ENCODE measurements at regions of chr2 and their contacts with region 1.

Region 1: DNA sequence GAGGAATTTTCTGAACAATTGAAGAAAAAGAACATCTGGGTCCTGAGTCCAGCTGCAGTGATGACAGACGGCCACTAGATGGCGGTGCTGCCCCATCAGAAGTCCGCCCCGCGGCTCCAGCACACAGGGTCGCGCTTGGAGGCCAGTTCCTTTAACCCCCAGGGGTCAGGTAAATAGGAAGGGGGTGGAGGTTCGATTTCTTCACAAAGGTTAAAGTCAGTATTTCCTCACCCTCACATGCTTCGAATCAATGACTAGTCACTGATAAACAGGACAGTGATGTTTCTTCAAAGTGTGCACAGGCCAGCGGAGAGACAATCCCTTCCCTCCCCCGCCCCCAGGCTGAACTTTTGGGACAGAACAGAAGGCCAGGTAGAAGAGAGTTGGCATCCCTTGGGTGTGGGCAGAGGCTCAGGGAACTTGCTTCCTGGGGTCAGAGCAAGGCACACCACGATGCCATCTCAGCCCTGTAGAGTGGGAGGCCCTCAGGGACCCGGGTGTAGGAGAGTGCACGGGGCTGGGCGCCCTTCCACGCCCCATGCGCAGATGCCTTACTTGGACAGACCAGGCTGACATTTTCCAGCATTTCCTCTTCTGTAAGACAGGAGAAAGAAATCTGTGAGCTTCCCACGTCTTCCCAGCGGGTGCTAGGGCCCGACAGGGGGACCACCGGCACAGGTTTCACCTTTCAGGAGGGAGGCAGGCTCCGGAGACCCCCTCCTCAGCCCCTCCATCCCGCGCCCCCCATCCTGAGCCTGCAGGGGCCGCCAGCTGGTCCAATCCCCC is 722 bp downstream of the APOB start:
- DNase-seq: peak; percentile 74 to 87
- H3K4me3 ChIP-seq: peak overlapping the region; percentile 5 to 34 (median 16)
- H3K27ac ChIP-seq: no peak overlapping the region
- H3K4me1 ChIP-seq: peaks cover 12 to 38% (median 24%) of the 10 kb centered on the region in 4 donors
- H3K27me3 ChIP-seq: peaks cover 0 to 36% (median 18%) of the 10 kb centered on the region in 3 donors
- CTCF ChIP-seq: peak in 5 of 7 experiments; percentile 84 to 97 (median 96)
- EP300 ChIP-seq: no peak
- POLR2A ChIP-seq: no peak

Region 2: GRCh38 chr2:21118302-21118920 is 75.3 kb after region 1 on chr2:
- intact Hi-C with region 1: loop called (anchors 10 kb)
- DNase-seq: peak in 1 of 2 donors; percentile 44
- H3K4me3 ChIP-seq: no peak overlapping the region
- H3K27ac ChIP-seq: no peak overlapping the region
- H3K4me1 ChIP-seq: no peaks in the 10 kb centered on the region
- H3K27me3 ChIP-seq: peaks cover 0 to 6% (median 0%) of the 10 kb centered on the region in 3 donors
- CTCF ChIP-seq: peak in 3 of 7 experiments; percentile 22 to 36 (median 27)
- EP300 ChIP-seq: no peak
- POLR2A ChIP-seq: no peak

Region 3: GRCh38 chr2:21270708-21271122 is 227.6 kb after region 1 on chr2:
- intact Hi-C with region 1: no loop called
- DNase-seq: peak in 1 of 2 donors; percentile 69
- H3K4me3 ChIP-seq: no peak overlapping the region
- H3K27ac ChIP-seq: peak overlapping the region in 1 of 5 donors; percentile 39
- H3K4me1 ChIP-seq: peaks cover 0 to 22% (median 2%) of the 10 kb centered on the region in 4 donors
- H3K27me3 ChIP-seq: no peaks in the 10 kb centered on the region
- CTCF ChIP-seq: no peak
- EP300 ChIP-seq: peak; percentile 62
- POLR2A ChIP-seq: no peak

Region 4: GRCh38 chr2:21317131-21317530 is 274.0 kb after region 1 on chr2:
- intact Hi-C with region 1: loop called (anchors 5 kb)
- DNase-seq: peak; percentile 50 to 67
- H3K4me3 ChIP-seq: no peak overlapping the region
- H3K27ac ChIP-seq: no peak overlapping the region
- H3K4me1 ChIP-seq: no peaks in the 10 kb centered on the region
- H3K27me3 ChIP-seq: no peaks in the 10 kb centered on the region
- CTCF ChIP-seq: peak in 5 of 7 experiments; percentile 38 to 85 (median 57)
- EP300 ChIP-seq: no peak
- POLR2A ChIP-seq: no peak

Region 5: DNA sequence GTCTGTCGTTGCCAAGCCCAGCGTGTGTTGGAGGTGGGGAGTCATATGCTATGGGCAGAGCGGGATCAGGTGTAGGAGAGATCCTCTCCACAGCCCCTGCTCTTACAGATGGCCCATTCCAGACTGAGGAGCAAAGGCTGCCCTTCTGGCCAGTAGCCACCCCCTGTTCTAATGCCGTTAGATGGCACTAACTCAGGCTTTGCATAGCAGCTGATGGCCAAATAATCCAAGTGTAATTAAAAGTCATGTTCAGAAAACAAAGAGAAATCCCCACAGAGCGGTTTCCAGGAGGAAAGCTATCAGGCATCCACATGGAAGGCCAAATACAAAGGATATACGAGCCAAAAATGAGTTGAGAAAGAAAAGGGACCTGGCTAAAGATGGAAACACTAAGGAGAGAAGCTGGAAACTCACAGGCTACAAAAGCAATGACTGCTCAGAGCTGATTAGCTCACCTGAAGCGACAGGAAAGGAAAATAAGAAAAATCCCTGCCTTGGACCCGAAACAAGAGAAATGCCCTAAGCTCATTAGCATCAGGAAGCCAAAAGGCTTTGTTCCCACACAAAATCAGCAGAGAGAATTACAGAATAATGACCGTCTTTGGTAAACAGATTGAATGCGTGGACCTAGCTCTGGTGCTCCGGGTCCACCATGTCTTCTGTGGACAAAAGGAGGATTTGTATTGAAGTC is 1339.5 kb after region 1 on chr2:
- intact Hi-C with region 1: no loop called
- DNase-seq: no peak
- H3K4me3 ChIP-seq: no peak overlapping the region
- H3K27ac ChIP-seq: no peak overlapping the region
- H3K4me1 ChIP-seq: no peaks in the 10 kb centered on the region
- H3K27me3 ChIP-seq: no peaks in the 10 kb centered on the region
- CTCF ChIP-seq: no peak
- EP300 ChIP-seq: no peak
- POLR2A ChIP-seq: no peak

Measured in stomach (tissue), 19 donors.